OCI-LY7 (cell line): ENCODE measurements at regions of chr9 and their contacts with region 1.

Region 1: GRCh38 chr9:102609461-102609860 is 385.7 kb upstream of the CYLC2 start:
- DNase-seq: no peak
- H3K4me3 ChIP-seq: no peak overlapping the region
- H3K27ac ChIP-seq: no peak overlapping the region
- H3K4me1 ChIP-seq: no peaks in the 10 kb centered on the region
- CTCF ChIP-seq: no peak

Region 2: DNA sequence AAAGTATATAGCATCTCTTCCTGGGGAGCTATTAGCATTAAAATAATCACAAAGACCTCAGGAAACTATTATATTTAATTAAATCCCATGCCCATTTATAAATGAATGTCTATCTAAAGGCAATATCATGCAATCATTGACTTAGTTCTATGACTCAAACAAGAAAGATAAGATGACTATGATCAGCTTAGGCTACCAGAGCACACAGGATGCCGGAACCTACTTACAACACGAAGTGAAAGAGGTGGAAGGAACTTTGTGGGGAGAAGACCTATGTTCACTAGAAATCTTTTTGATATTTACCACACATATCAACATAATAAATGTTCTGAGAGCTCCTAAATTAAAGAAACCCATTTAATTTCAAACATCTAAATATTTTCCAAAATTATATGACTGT is 41.4 kb after region 1 on chr9:
- CTCF ChIA-PET with region 1: no interaction called
- POLR2A ChIA-PET with region 1: no interaction called
- intact Hi-C with region 1: loop called (anchors 10 kb)
- DNase-seq: no peak
- H3K4me3 ChIP-seq: no peak overlapping the region
- H3K27ac ChIP-seq: no peak overlapping the region
- H3K4me1 ChIP-seq: no peaks in the 10 kb centered on the region
- CTCF ChIP-seq: no peak

Region 3: DNA sequence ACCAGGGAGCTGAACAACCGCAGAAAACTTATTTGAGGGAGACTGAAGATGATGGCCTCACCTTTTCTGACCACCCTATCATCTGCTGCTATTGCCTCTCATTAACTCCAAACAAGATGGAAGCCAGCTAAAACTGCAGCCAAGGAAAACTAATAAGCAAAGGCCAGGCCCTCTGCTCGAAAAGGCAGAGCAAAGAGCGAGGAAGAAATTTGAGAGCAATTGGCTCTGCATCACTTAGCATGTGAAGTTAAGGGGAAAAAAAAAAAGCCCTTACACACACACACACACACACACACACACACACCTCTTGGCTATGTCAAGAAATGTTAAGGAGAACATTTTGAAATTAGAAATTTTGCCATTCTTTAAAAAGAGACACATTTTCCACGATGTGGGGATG is 157.6 kb after region 1 on chr9:
- CTCF ChIA-PET with region 1: no interaction called
- POLR2A ChIA-PET with region 1: interaction called, 3 read pairs
- intact Hi-C with region 1: loop called (anchors 10 kb)
- DNase-seq: no peak
- H3K4me3 ChIP-seq: no peak overlapping the region
- H3K27ac ChIP-seq: no peak overlapping the region
- H3K4me1 ChIP-seq: no peaks in the 10 kb centered on the region
- CTCF ChIP-seq: no peak